Right ventricle myocardium inferior (tissue), 1 donor: ENCODE measurements at regions of chrX and their contacts with region 1.

Region 1: DNA sequence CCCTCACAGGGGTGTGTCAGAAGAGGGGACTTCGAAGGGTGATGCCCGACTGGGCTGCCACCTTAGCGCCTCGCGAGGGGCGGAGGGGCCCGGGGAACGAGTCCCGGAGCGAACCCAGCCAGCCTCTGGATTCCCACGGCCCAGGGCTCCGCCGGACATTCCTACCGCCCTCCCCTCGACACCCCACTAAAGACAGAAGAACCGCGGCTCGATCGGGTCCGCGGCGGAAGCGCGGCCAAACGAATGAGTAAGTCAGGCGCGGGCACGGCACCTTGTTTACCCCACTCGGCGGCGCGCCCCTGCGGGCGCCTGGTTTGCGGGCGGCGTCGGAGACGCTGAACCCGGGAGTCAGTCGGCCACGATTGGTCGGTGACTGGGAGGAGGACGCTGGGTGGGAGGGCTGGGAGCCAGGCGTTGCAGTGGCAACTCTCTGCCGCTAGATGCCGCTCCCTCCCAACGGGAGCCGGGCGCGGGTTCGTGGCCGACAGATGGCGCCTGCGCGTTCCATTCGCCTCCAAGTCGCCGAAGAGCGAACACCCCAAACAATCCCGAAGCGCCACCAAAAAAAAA is 1.4 kb upstream of the STAG2 start:
- DNase-seq: peak; percentile 94
- ATAC-seq: peak; percentile 87

Region 2: GRCh38 chrX:123859846-123860838 is 100.0 kb before region 1 on chrX and contains the start of gene XIAP:
- intact Hi-C with region 1: loop called (anchors 5 kb)
- DNase-seq: peak; percentile 91
- ATAC-seq: peak; percentile 98
- total RNA-seq, gene XIAP: 21.4 TPM

Region 3: GRCh38 chrX:123899701-123900100 is 60.4 kb before region 1 on chrX:
- intact Hi-C with region 1: no loop called
- DNase-seq: no peak
- ATAC-seq: no peak

Region 4: GRCh38 chrX:124018023-124018422 is 57.9 kb after region 1 on chrX:
- intact Hi-C with region 1: loop called (anchors 10 kb)
- DNase-seq: no peak
- ATAC-seq: no peak